Activated CD4-positive, alpha-beta memory T cell treated with anti-CD3 and anti-CD28 coated beads for 36 hours (primary cell): ENCODE measurements at regions of chr12 and their contacts with region 1.

Region 1: DNA sequence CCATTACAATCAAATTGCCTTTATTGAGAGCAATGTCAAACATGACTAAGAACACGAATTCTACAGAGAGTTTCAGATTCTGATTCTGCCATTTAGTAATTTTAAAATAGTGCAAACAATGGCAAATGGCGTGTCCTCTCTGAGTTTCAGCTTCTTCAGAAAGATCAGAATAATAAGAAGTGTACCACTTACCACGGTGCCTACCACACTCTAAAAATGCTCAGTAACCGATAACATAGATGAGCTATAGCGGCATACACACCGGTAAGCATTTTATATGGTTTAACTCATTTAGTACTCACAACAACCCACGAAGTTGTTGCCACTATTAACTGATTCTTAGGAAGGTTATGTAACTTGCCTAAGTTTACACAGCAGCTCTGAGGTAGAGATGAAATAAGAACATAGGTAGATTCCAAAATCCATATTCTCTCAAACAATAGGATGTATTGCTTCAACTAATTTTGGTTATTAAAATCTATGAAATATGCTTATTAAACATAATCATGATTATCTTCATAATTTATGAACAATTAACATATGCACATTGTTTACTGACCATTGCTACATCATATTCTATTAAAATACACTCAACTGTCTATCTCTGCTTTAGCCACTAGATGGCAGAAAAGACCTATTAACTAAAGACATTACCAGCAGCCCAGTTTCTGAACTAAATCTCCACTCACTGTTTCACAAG is 38.3 kb downstream of the SLC6A15 start:
- DNase-seq: no peak
- H3K4me3 Mint-ChIP-seq: no peak overlapping the region
- H3K27ac Mint-ChIP-seq: no peak overlapping the region
- H3K4me1 Mint-ChIP-seq: no peaks in the 10 kb centered on the region
- H3K27me3 Mint-ChIP-seq: peaks cover 2% of the 10 kb centered on the region

Region 2: DNA sequence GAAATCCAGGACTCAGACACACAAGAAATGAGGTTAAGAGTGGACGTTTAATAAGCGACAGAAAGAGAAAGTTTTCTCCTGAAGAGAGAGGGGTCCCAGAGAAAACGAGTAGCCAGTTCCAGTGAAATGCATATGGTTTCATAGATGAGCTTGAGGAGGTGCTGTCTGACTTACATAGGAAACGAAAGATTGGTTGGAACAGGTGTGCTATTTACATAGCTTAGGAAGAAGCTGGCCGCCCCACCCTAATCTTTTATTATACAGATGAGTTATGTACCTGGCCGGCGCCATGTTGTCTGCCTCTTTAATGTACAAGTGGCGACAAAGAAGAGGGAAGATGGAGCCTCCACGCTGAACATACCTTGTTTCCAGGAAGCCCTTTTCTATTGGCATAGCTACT is 184.6 kb before region 1 on chr12:
- CTCF ChIA-PET with region 1: no interaction called
- POLR2A ChIA-PET with region 1: no interaction called
- intact Hi-C with region 1: no loop called
- DNase-seq: no peak
- H3K4me3 Mint-ChIP-seq: no peak overlapping the region
- H3K27ac Mint-ChIP-seq: no peak overlapping the region
- H3K4me1 Mint-ChIP-seq: no peaks in the 10 kb centered on the region
- H3K27me3 Mint-ChIP-seq: no peaks in the 10 kb centered on the region

Region 3: DNA sequence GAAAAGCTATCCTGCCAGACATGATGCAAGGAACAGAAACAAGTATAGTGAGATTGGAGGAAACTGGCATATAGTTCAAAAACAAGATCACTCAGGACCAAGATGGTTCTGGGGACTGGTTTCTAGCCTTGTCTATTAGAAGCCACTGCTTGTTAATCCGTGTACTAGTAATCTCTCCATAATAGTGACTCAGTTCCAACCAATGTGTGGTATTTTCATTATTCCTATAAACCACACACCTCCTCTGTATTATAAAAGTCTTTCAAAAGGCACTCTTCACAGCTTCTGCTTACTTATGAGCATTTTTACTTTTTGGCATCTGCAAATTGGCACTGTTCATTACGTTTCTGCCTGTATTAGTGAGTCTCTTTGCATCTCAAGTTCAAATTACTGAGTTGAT is 102.0 kb before region 1 on chr12:
- CTCF ChIA-PET with region 1: no interaction called
- POLR2A ChIA-PET with region 1: no interaction called
- intact Hi-C with region 1: no loop called
- DNase-seq: no peak
- H3K4me3 Mint-ChIP-seq: no peak overlapping the region
- H3K27ac Mint-ChIP-seq: no peak overlapping the region
- H3K4me1 Mint-ChIP-seq: no peaks in the 10 kb centered on the region
- H3K27me3 Mint-ChIP-seq: no peaks in the 10 kb centered on the region

Region 4: GRCh38 chr12:84842406-84843013 is 31.8 kb before region 1 on chr12:
- CTCF ChIA-PET with region 1: interaction called, 12 read pairs
- POLR2A ChIA-PET with region 1: no interaction called
- intact Hi-C with region 1: no loop called
- DNase-seq: no peak
- H3K4me3 Mint-ChIP-seq: no peak overlapping the region
- H3K27ac Mint-ChIP-seq: no peak overlapping the region
- H3K4me1 Mint-ChIP-seq: peaks cover 18% of the 10 kb centered on the region
- H3K27me3 Mint-ChIP-seq: no peaks in the 10 kb centered on the region

Region 5: GRCh38 chr12:84862186-84862585 is 12.1 kb before region 1 on chr12:
- CTCF ChIA-PET with region 1: interaction called, 14 read pairs
- POLR2A ChIA-PET with region 1: no interaction called
- intact Hi-C with region 1: no loop called
- DNase-seq: no peak
- H3K4me3 Mint-ChIP-seq: no peak overlapping the region
- H3K27ac Mint-ChIP-seq: no peak overlapping the region
- H3K4me1 Mint-ChIP-seq: no peaks in the 10 kb centered on the region
- H3K27me3 Mint-ChIP-seq: peaks cover 1% of the 10 kb centered on the region

Region 6: DNA sequence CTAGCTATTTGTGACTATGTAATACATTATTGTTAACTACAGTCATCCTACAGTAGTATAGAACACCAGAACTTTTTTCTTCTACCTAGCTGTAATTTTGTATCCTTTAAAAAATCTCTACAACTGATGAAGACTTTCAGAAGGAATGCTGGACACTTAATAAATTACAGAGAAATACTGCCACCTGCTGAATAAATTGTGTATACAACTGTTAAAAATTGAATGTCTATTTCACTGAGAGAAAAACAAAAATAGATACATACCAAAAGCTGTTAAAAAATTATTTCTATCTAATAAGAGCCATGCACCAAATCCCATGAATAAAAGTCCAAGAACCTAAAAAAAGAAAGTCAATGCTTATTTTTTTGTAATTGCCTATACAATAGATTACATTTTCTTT is 155.2 kb after region 1 on chr12:
- CTCF ChIA-PET with region 1: interaction called, 116 read pairs
- POLR2A ChIA-PET with region 1: no interaction called
- intact Hi-C with region 1: loop called (anchors 1 kb)
- DNase-seq: no peak
- H3K4me3 Mint-ChIP-seq: no peak overlapping the region
- H3K27ac Mint-ChIP-seq: no peak overlapping the region
- H3K4me1 Mint-ChIP-seq: no peaks in the 10 kb centered on the region
- H3K27me3 Mint-ChIP-seq: no peaks in the 10 kb centered on the region

Region 7: GRCh38 chr12:85057370-85057963 is 183.2 kb after region 1 on chr12:
- CTCF ChIA-PET with region 1: interaction called, 27 read pairs
- POLR2A ChIA-PET with region 1: no interaction called
- intact Hi-C with region 1: loop called (anchors 1 kb)
- DNase-seq: peak; percentile 22
- H3K4me3 Mint-ChIP-seq: no peak overlapping the region
- H3K27ac Mint-ChIP-seq: no peak overlapping the region
- H3K4me1 Mint-ChIP-seq: no peaks in the 10 kb centered on the region
- H3K27me3 Mint-ChIP-seq: no peaks in the 10 kb centered on the region

Region 8: GRCh38 chr12:85872497-85873091 is 998.3 kb after region 1 on chr12:
- CTCF ChIA-PET with region 1: interaction called, 5 read pairs
- POLR2A ChIA-PET with region 1: no interaction called
- intact Hi-C with region 1: loop called (anchors 5 kb)
- DNase-seq: no peak
- H3K4me3 Mint-ChIP-seq: no peak overlapping the region
- H3K27ac Mint-ChIP-seq: no peak overlapping the region
- H3K4me1 Mint-ChIP-seq: no peaks in the 10 kb centered on the region
- H3K27me3 Mint-ChIP-seq: no peaks in the 10 kb centered on the region

Region 9: DNA sequence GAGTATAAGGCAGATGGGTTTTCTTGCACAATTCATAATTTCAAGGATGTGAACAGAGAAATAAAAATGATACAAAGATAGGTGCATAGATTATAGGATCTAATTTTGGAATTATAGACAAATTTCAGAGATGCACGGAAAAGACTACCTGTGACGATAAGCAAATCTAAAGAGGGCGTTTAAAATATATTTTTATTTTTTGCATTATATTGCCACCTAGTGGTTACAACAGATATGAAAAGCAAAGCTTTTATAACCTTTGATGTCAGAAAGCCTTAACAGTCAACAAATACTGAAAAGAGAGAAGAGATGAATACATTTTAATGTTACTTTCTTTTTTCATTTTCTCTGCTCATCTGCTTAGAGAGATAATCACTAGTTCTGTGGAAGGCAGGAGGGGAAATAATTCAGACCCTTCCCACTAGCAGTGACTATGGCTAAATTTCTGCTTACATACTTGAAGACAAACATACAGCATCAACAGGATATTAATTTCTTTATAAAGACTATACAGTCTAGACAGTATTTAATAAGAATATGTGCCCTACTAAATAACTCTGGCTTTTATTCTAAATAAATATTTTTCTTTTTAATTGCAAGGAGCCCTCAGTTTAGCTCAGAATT is 1046.2 kb after region 1 on chr12:
- CTCF ChIA-PET with region 1: interaction called, 14 read pairs
- POLR2A ChIA-PET with region 1: no interaction called
- intact Hi-C with region 1: loop called (anchors 10 kb)
- DNase-seq: no peak
- H3K4me3 Mint-ChIP-seq: no peak overlapping the region
- H3K27ac Mint-ChIP-seq: no peak overlapping the region
- H3K4me1 Mint-ChIP-seq: no peaks in the 10 kb centered on the region
- H3K27me3 Mint-ChIP-seq: no peaks in the 10 kb centered on the region